Left ventricle myocardium superior (tissue), 1 donor: ENCODE measurements at regions of chr3 and their contacts with region 1.

Region 1: GRCh38 chr3:42839616-42840015 is 30.4 kb downstream of the ACKR2 start:
- DNase-seq: peak; percentile 36
- ATAC-seq: peak; percentile 85

Region 2: DNA sequence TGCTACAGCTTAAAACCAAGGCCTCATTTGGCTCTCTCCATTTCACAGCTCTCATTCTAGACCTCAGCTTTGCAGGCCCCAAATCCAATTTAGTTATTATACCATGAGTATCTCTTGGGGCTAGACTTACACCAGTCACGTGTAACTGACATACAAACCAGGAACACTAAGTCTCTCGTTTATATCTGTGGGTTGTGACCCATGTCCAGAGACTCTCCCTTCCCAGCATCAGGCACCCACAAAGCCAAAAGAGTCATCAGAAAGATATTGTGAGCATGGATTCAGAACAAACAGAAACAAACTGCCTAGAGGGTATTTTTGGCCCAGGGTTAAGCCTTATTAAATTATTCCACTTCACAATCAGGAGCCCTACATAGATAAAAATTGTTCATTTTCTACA is 61.0 kb before region 1 on chr3:
- intact Hi-C with region 1: loop called (anchors 5 kb)
- DNase-seq: no peak
- ATAC-seq: peak; percentile 70

Region 3: DNA sequence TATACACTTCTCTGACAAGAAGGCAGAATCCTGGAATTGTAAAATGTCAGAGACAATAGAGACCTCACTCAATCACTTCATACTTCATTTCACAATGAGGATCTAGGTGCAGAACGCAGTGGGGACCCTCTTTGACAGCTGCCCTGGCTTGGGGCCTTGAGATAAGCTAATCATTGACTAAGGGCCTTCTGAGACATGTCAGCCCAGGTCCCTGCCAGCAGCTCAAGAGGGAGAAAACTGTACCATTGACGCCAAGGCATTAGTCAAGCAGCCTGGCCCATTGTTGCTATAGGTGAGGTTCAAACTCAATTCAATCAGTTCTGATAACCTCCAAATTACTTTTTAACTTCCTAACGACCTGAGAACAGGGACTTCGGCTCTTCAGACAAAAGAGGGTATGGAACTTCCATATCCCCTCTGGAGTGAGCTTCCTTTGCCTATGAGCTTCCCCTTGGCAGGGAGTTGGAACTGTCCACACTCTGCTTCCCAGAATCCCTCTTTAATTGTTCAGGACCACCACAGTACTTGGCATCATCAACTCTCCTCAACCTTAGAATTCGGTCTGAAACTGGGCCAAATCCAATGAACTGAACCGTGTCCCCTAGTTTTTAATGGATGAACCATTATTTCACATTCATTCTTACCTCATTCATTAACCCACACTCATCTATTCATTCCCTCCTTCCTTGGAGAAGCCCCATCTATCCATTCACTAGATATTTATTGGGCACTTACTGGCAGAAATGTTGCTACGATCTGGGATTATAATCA is 37.5 kb after region 1 on chr3:
- intact Hi-C with region 1: loop called (anchors 5 kb)
- DNase-seq: no peak
- ATAC-seq: no peak

Region 4: GRCh38 chr3:43071313-43071893 is 231.8 kb after region 1 on chr3:
- intact Hi-C with region 1: no loop called
- DNase-seq: no peak
- ATAC-seq: no peak